ENCODE measurements at regions of chr12 and their contacts with region 1.

Region 1: DNA sequence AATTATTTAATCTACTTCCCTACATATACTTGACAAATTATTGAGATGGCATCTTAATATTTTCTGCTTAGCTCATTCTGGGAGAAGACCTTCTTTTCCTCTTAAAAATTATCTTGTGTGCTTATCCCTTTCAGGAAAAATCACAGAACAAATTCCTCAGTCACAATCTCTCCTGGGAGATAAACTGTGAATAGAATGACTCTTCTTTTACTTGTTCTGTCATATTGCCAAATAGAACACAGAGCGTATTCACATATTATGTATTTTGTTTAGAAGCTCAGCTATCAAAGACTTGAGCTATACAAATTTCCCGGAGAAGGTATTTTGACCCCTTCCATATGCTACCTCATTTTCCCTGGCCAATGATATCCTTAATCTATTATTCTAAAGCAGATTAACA is 146.7 kb downstream of the TMEM117 start:
- DNase-seq: no peak
- H3K4me3 ChIP-seq: no peak overlapping the region
- H3K4me3 Mint-ChIP-seq: no peak overlapping the region
- H3K27ac Mint-ChIP-seq: peak overlapping the region; percentile 91
- H3K4me1 ChIP-seq: peaks cover 39% of the 10 kb centered on the region
- H3K4me1 Mint-ChIP-seq: peaks cover 31% of the 10 kb centered on the region
- H3K27me3 ChIP-seq: no peaks in the 10 kb centered on the region
- H3K27me3 Mint-ChIP-seq: no peaks in the 10 kb centered on the region
- CTCF ChIP-seq: no peak

Region 2: GRCh38 chr12:43969882-43970281 is 12.7 kb before region 1 on chr12:
- CTCF ChIA-PET with region 1: no interaction called
- POLR2A ChIA-PET with region 1: no interaction called
- intact Hi-C with region 1: loop called (anchors 1 kb)
- DNase-seq: no peak
- H3K4me3 ChIP-seq: no peak overlapping the region
- H3K4me3 Mint-ChIP-seq: no peak overlapping the region
- H3K27ac Mint-ChIP-seq: no peak overlapping the region
- H3K4me1 ChIP-seq: no peaks in the 10 kb centered on the region
- H3K4me1 Mint-ChIP-seq: no peaks in the 10 kb centered on the region
- H3K27me3 ChIP-seq: no peaks in the 10 kb centered on the region
- H3K27me3 Mint-ChIP-seq: no peaks in the 10 kb centered on the region
- CTCF ChIP-seq: no peak